MCF 10A (cell line): ENCODE measurements at regions of chr12 and their contacts with region 1.

Region 1: GRCh38 chr12:125696044-125696443 is 630.8 kb downstream of the AACS start:
- DNase-seq: no peak
- H3K4me3 Mint-ChIP-seq: no peak overlapping the region
- H3K27ac Mint-ChIP-seq: no peak overlapping the region
- H3K4me1 Mint-ChIP-seq: no peaks in the 10 kb centered on the region
- H3K27me3 Mint-ChIP-seq: no peaks in the 10 kb centered on the region
- CTCF ChIP-seq: no peak

Region 2: DNA sequence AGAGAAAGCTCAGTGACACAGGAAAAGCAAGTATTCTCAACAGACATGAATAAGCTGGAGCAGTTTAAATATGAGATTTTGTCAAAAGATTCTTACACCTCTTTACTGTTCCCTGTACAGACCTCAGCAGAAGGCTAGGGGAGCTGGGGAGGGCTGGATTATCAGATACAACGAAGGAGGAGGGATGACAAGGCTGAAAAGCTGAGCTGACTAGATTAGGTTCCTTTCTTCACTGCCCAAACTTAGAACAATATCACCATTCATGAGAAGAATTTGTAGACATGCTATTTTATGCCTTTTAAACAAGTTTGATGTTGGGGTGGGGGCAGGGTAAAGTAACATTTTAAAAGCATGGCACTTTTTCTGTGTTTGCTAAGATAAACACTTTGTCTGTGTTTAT is 19.7 kb before region 1 on chr12:
- CTCF ChIA-PET with region 1: interaction called, 3 read pairs
- POLR2A ChIA-PET with region 1: no interaction called
- intact Hi-C with region 1: loop called (anchors 1 kb)
- DNase-seq: no peak
- H3K4me3 Mint-ChIP-seq: no peak overlapping the region
- H3K27ac Mint-ChIP-seq: no peak overlapping the region
- H3K4me1 Mint-ChIP-seq: no peaks in the 10 kb centered on the region
- H3K27me3 Mint-ChIP-seq: no peaks in the 10 kb centered on the region
- CTCF ChIP-seq: no peak